ENCODE measurements at regions of chr5 and their contacts with region 1.

Region 1: DNA sequence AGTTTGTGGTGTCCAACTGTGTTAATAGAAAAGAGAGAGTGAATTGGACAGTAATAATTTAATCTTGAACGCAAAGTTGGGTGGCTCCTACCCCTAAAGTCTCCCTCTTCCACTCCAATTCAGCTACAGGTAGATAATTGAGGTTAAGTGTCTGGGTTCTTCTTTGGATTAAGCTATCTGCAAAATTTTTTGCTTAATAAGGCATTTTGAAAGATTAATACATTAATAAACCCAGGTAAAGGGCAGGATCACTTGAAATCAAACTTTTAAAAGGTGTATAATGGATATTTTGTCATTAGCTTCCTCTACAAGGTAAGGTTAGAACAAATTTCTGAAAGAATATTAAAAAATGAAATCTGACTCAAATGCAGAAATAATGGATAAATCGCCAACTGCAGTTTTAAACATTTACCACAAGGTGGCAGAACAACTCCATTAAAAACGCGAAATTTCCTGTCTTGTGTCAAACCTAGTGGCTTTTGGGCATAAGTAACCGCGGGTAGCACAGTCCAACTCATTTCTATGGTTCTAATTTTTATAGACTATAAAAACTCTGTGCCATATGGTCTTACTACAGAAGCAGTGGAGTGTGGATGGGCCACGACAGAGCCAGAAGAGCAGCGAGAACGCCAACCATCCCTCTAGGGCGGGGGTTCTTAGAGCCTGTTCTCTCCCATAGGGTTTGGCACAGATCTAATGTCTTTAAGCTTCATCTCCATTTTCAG is 276.5 kb downstream of the ARHGEF28 start:
- DNase-seq: peak in 2 of 9 experiments; percentile 56 to 68
- ATAC-seq: peak; percentile 38
- H3K4me3 ChIP-seq: no peak overlapping the region
- H3K4me3 Mint-ChIP-seq: no peak overlapping the region
- H3K27ac ChIP-seq: no peak overlapping the region
- H3K27ac Mint-ChIP-seq: no peak overlapping the region
- H3K4me1 ChIP-seq: no peaks in the 10 kb centered on the region
- H3K4me1 Mint-ChIP-seq: no peaks in the 10 kb centered on the region
- H3K27me3 ChIP-seq: no peaks in the 10 kb centered on the region
- H3K27me3 Mint-ChIP-seq: peaks cover 17% of the 10 kb centered on the region
- CTCF ChIP-seq: peak; percentile 97

Region 2: DNA sequence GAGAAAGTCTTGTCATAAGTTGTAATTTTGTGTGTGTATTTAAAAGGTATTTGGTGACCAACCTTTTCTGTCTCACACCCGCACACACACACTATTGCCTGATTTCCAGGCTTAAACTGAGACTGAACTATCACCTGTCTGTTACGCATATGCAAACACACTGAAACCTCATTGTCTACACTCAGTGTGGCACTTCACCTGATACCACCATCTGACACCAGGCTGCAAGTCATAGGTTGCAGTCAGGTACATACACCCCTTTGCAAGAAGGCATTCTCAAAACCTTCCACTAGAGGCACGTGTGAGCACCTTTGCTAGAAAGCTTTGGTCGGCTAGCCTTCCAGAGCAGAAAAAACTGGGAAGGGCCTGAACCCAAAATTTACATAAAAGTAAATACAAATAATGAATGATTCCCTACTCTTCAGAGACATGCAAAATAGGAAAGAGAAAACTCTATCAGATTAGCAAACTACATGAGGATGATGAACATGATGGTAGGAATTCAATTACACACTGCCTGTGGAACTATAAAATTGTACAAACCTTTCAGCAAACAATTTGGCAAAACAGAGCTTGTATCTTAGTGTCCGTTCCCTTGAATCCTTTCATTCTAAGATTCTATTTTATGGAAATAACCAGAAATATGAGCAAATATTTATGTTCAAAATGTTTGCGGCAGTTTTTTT is 448.0 kb before region 1 on chr5:
- CTCF ChIA-PET with region 1: no interaction called
- POLR2A ChIA-PET with region 1: no interaction called
- intact Hi-C with region 1: no loop called
- DNase-seq: peak in 5 of 9 experiments; percentile 27 to 71 (median 45)
- ATAC-seq: peak; percentile 82
- H3K4me3 ChIP-seq: no peak overlapping the region
- H3K4me3 Mint-ChIP-seq: no peak overlapping the region
- H3K27ac ChIP-seq: no peak overlapping the region
- H3K27ac Mint-ChIP-seq: no peak overlapping the region
- H3K4me1 ChIP-seq: peaks cover 5% of the 10 kb centered on the region
- H3K4me1 Mint-ChIP-seq: peaks cover 6% of the 10 kb centered on the region
- H3K27me3 ChIP-seq: peaks cover 36 to 39% of the 10 kb centered on the region in 2 experiments
- H3K27me3 Mint-ChIP-seq: peaks cover 67% of the 10 kb centered on the region
- CTCF ChIP-seq: peak; percentile 71

Region 3: GRCh38 chr5:73917433-73917832 is 14.9 kb after region 1 on chr5:
- CTCF ChIA-PET with region 1: interaction called, 14 read pairs
- POLR2A ChIA-PET with region 1: no interaction called
- intact Hi-C with region 1: no loop called
- DNase-seq: no peak
- ATAC-seq: no peak
- H3K4me3 ChIP-seq: no peak overlapping the region
- H3K4me3 Mint-ChIP-seq: no peak overlapping the region
- H3K27ac ChIP-seq: no peak overlapping the region
- H3K27ac Mint-ChIP-seq: no peak overlapping the region
- H3K4me1 ChIP-seq: no peaks in the 10 kb centered on the region
- H3K4me1 Mint-ChIP-seq: no peaks in the 10 kb centered on the region
- H3K27me3 ChIP-seq: peaks cover 0 to 2% of the 10 kb centered on the region in 2 experiments
- H3K27me3 Mint-ChIP-seq: no peaks in the 10 kb centered on the region
- CTCF ChIP-seq: no peak

Region 4: DNA sequence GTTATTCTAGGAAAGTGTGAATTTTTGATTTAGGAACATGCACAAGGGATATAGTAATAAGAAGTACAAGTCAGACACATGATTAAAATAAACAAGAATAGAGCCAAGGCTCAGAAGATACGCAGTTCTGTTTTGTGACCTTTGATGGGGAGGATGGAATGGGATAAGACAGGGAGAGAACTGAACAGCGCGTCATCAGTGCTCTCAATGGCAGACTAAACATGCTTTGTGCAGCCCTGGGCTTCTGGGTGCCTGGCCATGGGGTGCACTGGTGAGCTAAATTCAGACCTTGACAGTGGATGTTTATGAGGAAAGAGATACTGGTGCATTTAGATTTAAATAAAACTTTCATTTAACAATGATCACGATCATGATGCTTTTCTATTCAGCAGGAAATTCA is 33.2 kb after region 1 on chr5:
- CTCF ChIA-PET with region 1: no interaction called
- POLR2A ChIA-PET with region 1: no interaction called
- intact Hi-C with region 1: no loop called
- DNase-seq: no peak
- ATAC-seq: no peak
- H3K4me3 ChIP-seq: no peak overlapping the region
- H3K4me3 Mint-ChIP-seq: no peak overlapping the region
- H3K27ac ChIP-seq: no peak overlapping the region
- H3K27ac Mint-ChIP-seq: no peak overlapping the region
- H3K4me1 ChIP-seq: no peaks in the 10 kb centered on the region
- H3K4me1 Mint-ChIP-seq: no peaks in the 10 kb centered on the region
- H3K27me3 ChIP-seq: no peaks in the 10 kb centered on the region
- H3K27me3 Mint-ChIP-seq: peaks cover 10% of the 10 kb centered on the region
- CTCF ChIP-seq: no peak

Region 5: DNA sequence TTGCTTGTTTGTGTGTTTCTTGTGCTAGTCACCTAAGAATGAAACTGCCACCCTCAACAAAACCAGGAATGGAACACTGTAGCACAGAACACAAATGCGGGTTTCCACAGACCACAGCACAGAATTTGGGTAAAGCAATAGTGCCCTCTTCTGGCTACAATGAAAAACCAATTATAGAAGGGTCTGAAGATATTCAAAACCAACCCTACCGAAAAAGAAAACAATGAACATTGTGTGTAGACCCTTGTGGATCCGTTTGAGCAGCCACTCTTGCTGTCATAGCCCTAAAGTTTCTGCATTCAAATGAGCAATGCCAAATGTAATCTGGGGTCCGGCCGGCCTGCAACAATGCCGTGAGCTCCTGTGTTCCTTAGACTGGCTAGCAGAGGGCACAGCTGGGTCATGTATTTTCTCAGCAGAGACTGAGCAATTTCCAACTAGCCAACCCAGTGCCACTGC is 746.4 kb after region 1 on chr5:
- CTCF ChIA-PET with region 1: interaction called, 67 read pairs
- POLR2A ChIA-PET with region 1: interaction called, 3 read pairs
- intact Hi-C with region 1: loop called (anchors 1 kb)
- DNase-seq: peak in 5 of 9 experiments; percentile 28 to 77 (median 53)
- ATAC-seq: peak; percentile 74
- H3K4me3 ChIP-seq: no peak overlapping the region
- H3K4me3 Mint-ChIP-seq: no peak overlapping the region
- H3K27ac ChIP-seq: no peak overlapping the region
- H3K27ac Mint-ChIP-seq: no peak overlapping the region
- H3K4me1 ChIP-seq: no peaks in the 10 kb centered on the region
- H3K4me1 Mint-ChIP-seq: peaks cover 2% of the 10 kb centered on the region
- H3K27me3 ChIP-seq: no peaks in the 10 kb centered on the region
- H3K27me3 Mint-ChIP-seq: peaks cover 14% of the 10 kb centered on the region
- CTCF ChIP-seq: peak; percentile 67

Region 6: GRCh38 chr5:74919487-74919886 is 1017.0 kb after region 1 on chr5:
- CTCF ChIA-PET with region 1: interaction called, 6 read pairs
- POLR2A ChIA-PET with region 1: no interaction called
- intact Hi-C with region 1: loop called (anchors 2 kb)
- DNase-seq: peak in 3 of 9 experiments; percentile 18 to 73 (median 62)
- ATAC-seq: peak; percentile 78
- H3K4me3 ChIP-seq: no peak overlapping the region
- H3K4me3 Mint-ChIP-seq: no peak overlapping the region
- H3K27ac ChIP-seq: no peak overlapping the region
- H3K27ac Mint-ChIP-seq: no peak overlapping the region
- H3K4me1 ChIP-seq: no peaks in the 10 kb centered on the region
- H3K4me1 Mint-ChIP-seq: no peaks in the 10 kb centered on the region
- H3K27me3 ChIP-seq: no peaks in the 10 kb centered on the region
- H3K27me3 Mint-ChIP-seq: peaks cover 2% of the 10 kb centered on the region
- CTCF ChIP-seq: peak; percentile 79

Region 7: DNA sequence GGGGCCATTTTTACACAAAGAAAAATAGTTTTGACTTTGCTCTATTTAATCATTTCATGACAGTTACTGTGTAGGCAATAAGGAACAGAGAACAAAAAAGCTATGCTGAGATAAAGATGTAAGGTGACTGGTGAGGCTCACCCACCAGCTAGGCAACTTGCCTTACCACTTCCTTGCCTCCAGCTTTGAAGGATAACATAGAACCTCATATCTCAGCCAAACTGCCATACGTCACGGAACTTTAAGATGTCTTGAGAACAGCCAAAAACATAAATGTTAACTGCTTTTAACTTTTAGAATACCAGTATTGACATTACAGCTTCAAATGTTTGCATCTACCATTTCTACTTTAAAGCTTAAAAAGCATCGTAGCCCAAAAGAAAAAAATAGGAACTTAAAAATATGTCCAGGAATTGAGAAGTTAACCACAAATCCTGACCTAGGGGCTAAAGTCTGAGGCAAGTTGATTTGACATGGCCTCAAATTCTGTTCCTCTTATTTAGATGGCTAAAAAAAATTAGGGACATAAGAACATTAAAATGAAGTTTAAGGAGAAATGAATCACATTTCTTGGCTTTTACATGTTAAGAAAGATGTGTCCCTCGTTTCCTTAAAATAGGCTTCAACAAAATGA is 1157.5 kb after region 1 on chr5:
- CTCF ChIA-PET with region 1: no interaction called
- POLR2A ChIA-PET with region 1: no interaction called
- intact Hi-C with region 1: no loop called
- DNase-seq: peak in 5 of 9 experiments; percentile 49 to 88 (median 75)
- ATAC-seq: peak; percentile 88
- H3K4me3 ChIP-seq: no peak overlapping the region
- H3K4me3 Mint-ChIP-seq: peak overlapping the region; percentile 13
- H3K27ac ChIP-seq: peak overlapping the region; percentile 70 to 72
- H3K27ac Mint-ChIP-seq: peak overlapping the region; percentile 91
- H3K4me1 ChIP-seq: peaks cover 81% of the 10 kb centered on the region
- H3K4me1 Mint-ChIP-seq: peaks cover 81% of the 10 kb centered on the region
- H3K27me3 ChIP-seq: no peaks in the 10 kb centered on the region
- H3K27me3 Mint-ChIP-seq: no peaks in the 10 kb centered on the region
- CTCF ChIP-seq: no peak

Region 8: DNA sequence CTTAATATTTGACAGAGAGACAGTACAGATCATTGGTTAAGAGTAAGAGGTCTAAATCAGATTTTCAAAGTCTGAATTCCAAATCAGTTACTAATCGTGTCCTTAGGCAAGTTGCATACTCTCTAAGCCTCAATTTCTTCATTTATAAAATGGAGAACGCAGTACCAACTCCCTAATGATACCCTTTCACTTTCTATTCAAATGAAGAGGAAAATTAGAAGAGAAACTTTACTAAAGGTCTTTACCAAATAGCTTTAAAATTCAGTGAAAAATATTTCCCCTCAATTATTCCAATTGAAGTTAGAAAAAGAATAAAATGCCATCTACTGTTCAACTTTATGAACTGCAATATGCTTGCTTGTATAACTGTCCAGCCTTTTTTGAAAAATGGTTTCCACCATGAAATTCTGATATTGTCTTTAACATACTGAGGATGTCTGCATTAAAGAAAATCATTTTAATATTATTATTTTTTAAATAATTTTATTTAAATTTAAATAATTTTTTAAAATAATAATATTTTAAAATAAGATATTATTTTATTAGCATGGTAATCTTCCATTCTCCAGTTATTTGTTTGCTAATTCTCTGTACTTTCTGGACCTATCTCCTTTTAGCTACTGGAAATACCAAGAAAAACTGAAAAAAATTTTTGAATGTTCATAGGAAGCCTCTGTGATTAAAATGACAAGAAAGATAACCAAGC is 1778.8 kb after region 1 on chr5:
- CTCF ChIA-PET with region 1: no interaction called
- POLR2A ChIA-PET with region 1: no interaction called
- intact Hi-C with region 1: loop called in 1 of 2 experiments (anchors 5 kb)
- DNase-seq: peak in 2 of 9 experiments; percentile 45 to 61
- ATAC-seq: peak; percentile 49
- H3K4me3 ChIP-seq: no peak overlapping the region
- H3K4me3 Mint-ChIP-seq: no peak overlapping the region
- H3K27ac ChIP-seq: no peak overlapping the region
- H3K27ac Mint-ChIP-seq: no peak overlapping the region
- H3K4me1 ChIP-seq: peaks cover 10% of the 10 kb centered on the region
- H3K4me1 Mint-ChIP-seq: peaks cover 8% of the 10 kb centered on the region
- H3K27me3 ChIP-seq: no peaks in the 10 kb centered on the region
- H3K27me3 Mint-ChIP-seq: no peaks in the 10 kb centered on the region
- CTCF ChIP-seq: peak; percentile 90